ENCODE measurements at regions of chr7 and their contacts with region 1.

Region 1: GRCh38 chr7:50449881-50450589 is at the start of gene FIGNL1:
- DNase-seq: peak; percentile 96
- H3K4me3 Mint-ChIP-seq: peak within 1 kb of the TSS; percentile 95
- H3K27ac Mint-ChIP-seq: peak within 1 kb of the TSS; percentile 80
- H3K4me1 Mint-ChIP-seq: peaks cover 39% of the 10 kb centered on the region
- H3K27me3 Mint-ChIP-seq: peaks cover 7% of the 10 kb centered on the region
- total RNA-seq, gene FIGNL1: 44.7 and 47.4 TPM in 2 replicates

Region 2: GRCh38 chr7:50206453-50207250 is 243.4 kb before region 1 on chr7:
- intact Hi-C with region 1: loop called (anchors 2 kb)
- DNase-seq: peak; percentile 90
- H3K4me3 Mint-ChIP-seq: peak overlapping the region; percentile 69
- H3K27ac Mint-ChIP-seq: peak overlapping the region; percentile 95
- H3K4me1 Mint-ChIP-seq: peaks cover 77% of the 10 kb centered on the region
- H3K27me3 Mint-ChIP-seq: no peaks in the 10 kb centered on the region

Region 3: GRCh38 chr7:50335795-50336754 is 114.0 kb before region 1 on chr7:
- intact Hi-C with region 1: loop called (anchors 5 kb)
- DNase-seq: peak; percentile 92
- H3K4me3 Mint-ChIP-seq: no peak overlapping the region
- H3K27ac Mint-ChIP-seq: no peak overlapping the region
- H3K4me1 Mint-ChIP-seq: peaks cover 63% of the 10 kb centered on the region
- H3K27me3 Mint-ChIP-seq: no peaks in the 10 kb centered on the region

Region 4: GRCh38 chr7:50397320-50397970 is 52.6 kb before region 1 on chr7:
- intact Hi-C with region 1: loop called (anchors 1 kb)
- DNase-seq: peak; percentile 87
- H3K4me3 Mint-ChIP-seq: peak overlapping the region; percentile 82
- H3K27ac Mint-ChIP-seq: peak overlapping the region; percentile 97
- H3K4me1 Mint-ChIP-seq: peaks cover 63% of the 10 kb centered on the region
- H3K27me3 Mint-ChIP-seq: no peaks in the 10 kb centered on the region

Region 5: GRCh38 chr7:50610521-50611277 is 160.7 kb after region 1 on chr7:
- intact Hi-C with region 1: loop called (anchors 5 kb)
- DNase-seq: peak; percentile 86
- H3K4me3 Mint-ChIP-seq: no peak overlapping the region
- H3K27ac Mint-ChIP-seq: no peak overlapping the region
- H3K4me1 Mint-ChIP-seq: peaks cover 24% of the 10 kb centered on the region
- H3K27me3 Mint-ChIP-seq: peaks cover 22% of the 10 kb centered on the region

Region 6: GRCh38 chr7:51123322-51124029 is 673.4 kb after region 1 on chr7:
- intact Hi-C with region 1: loop called (anchors 5 kb)
- DNase-seq: peak; percentile 81
- H3K4me3 Mint-ChIP-seq: no peak overlapping the region
- H3K27ac Mint-ChIP-seq: peak overlapping the region; percentile 78
- H3K4me1 Mint-ChIP-seq: peaks cover 27% of the 10 kb centered on the region
- H3K27me3 Mint-ChIP-seq: no peaks in the 10 kb centered on the region

Region 7: DNA sequence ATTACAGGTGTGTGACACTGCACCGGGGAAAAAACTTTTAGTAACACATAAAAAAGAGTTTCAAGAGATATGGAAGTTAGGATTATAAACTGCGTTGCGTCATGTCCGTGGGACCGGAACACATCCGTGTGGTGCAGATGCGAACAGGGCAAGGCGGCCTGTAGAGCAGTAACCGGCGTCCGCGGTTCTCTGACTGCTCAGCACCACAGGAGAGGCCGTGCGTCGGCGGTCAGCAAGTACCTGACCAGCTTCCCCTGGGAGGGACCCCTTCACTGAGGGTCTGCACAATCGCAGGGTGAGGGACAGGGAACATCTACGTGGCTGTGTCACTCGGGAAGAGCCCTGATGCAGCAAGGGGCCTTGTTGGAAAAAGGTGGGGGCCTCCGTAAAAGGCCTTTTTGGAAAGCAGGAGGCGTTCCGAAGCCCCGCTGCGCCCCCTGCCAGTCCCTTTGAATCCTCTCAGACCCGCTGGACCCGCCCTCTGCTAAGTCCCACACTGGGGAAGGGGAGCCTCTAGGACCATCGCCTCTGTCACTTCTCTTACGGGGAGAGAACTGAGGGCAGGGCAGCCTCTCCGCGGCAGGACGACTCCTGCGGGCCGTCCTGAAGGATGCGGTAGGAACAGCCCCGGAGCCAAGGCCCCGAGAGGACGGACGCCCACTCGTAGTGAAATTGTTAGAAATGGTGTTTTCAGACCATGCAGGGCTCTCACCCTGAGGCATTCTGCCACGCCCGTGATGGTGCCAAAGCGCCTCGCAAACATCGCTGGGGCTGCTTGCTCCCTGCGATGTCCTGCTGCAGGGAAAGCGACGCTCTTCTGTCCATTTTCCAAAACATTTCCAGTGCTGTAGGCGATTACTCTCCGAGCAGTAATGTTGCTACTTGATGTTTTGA is 1638.2 kb after region 1 on chr7:
- intact Hi-C with region 1: no loop called
- DNase-seq: no peak
- H3K4me3 Mint-ChIP-seq: no peak overlapping the region
- H3K27ac Mint-ChIP-seq: no peak overlapping the region
- H3K4me1 Mint-ChIP-seq: no peaks in the 10 kb centered on the region
- H3K27me3 Mint-ChIP-seq: no peaks in the 10 kb centered on the region

Measured in activated CD4-positive, alpha-beta T cell treated with anti-CD3 and anti-CD28 coated beads, Interleukin-2, amount 10 ng/mL, durations not matched to agents 24 days and 14 days (primary cell).